ENCODE measurements at regions of chr6 and their contacts with region 1.

Region 1: DNA sequence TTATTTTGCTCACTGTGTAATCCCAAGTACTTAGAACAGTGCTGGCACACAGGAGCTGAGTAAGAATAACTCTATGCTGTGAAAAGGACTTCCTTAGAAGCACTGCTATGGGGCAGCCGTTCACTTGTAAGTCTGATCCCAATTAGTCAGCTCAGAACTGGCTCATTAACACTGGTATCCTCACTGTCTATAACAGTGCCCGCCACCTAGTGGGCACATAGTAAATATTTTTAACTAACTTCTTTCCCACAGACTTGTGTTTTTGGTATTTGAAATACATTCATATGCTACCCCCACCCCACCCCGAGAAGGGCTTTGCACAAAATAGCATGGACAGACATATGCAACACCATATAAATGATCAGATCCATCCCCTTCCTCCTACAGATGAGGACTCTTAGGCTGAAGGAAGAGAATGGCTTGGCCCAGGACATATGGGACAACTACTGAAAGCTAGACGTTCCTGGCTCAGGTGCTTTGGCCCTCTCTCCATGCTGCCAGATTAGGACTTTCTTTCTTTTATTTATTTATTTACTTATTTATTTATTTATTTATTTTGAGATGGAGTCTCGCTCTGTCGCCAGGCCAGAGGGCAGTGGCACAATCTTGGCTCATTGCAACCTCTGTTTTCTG is 47.1 kb downstream of the DST start:
- DNase-seq: peak; percentile 5 to 43
- H3K4me3 ChIP-seq: no peak overlapping the region
- H3K27ac ChIP-seq: no peak overlapping the region
- H3K4me1 ChIP-seq: no peaks in the 10 kb centered on the region
- H3K27me3 ChIP-seq: no peaks in the 10 kb centered on the region
- CTCF ChIP-seq: peak; percentile 81

Region 2: DNA sequence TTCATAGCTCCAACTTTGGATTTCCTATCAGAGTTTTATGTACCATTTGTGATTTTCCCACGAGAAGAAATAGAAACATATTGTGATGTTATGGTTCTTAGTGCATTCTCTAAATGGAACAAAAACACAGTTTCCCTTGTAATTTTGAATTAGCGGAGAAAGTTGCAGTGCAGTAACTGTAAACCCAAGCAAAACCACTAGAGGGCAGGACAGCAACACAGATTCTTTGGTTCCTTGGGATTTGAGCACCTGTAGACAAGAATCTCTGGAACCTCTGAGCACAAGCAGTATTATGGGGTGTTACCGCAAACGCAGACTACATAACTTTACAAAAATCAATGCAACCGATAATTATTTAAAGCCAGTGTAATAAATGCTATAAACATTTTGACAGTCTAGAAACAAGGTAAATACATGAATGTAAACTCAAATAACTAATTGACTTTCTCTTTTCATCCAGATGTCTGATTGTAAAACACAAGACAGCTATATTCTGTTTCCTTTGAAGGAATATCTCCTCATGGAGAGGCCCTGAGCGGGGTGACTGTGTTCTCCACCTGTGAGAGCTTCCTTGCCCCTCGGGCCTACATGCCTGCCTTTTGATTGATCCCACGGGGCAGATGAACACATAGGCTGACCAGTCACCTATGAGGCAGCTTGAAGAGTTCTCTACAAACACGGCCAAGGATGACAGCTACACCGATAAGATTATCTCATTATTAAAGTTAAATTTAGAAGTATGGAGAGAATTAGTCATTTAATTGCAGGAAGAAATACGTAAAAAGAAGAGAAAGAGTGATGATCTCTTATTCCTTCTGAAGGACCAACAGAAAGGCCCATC is 280.7 kb before region 1 on chr6:
- CTCF ChIA-PET with region 1: interaction called, 4 read pairs
- POLR2A ChIA-PET with region 1: no interaction called
- intact Hi-C with region 1: loop called (anchors 1 kb)
- DNase-seq: peak in 1 of 2 experiments; percentile 29
- H3K4me3 ChIP-seq: no peak overlapping the region
- H3K27ac ChIP-seq: no peak overlapping the region
- H3K4me1 ChIP-seq: no peaks in the 10 kb centered on the region
- H3K27me3 ChIP-seq: no peaks in the 10 kb centered on the region
- CTCF ChIP-seq: peak; percentile 87

Region 3: DNA sequence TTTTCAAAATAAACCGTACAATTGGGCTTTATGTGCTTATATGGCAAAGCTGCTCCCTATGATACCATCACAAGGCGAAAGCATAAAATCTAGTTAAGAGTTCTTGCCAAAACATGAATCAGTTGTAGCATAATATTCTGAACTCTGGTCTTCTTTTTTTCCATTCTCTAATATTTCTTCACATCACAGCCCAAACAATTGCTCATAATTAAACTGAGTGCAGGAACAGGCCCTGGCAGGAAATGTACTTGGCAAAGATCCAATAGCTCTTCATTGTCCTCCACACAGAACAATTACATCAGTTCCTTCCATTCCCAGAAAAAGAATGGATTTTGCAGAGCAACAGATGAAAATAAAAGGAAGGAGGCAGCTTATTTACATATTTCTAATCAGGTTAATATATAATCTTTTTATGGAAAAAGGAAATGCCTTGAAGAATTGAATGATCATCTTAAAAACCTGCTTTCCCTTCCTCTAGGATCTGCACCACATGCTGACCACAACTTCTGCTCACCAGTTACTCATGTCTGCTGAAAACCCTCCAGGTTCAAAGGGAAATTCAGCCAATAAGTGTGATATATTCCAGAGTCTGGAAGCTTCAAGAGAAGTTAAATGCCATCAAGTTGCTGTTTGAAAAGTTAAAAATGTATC is 224.9 kb before region 1 on chr6:
- CTCF ChIA-PET with region 1: interaction called, 3 read pairs
- POLR2A ChIA-PET with region 1: interaction called, 5 read pairs
- intact Hi-C with region 1: loop called (anchors 5 kb)
- DNase-seq: peak in 1 of 2 experiments; percentile 54
- H3K4me3 ChIP-seq: no peak overlapping the region
- H3K27ac ChIP-seq: peak overlapping the region; percentile 37
- H3K4me1 ChIP-seq: peaks cover 20% of the 10 kb centered on the region
- H3K27me3 ChIP-seq: no peaks in the 10 kb centered on the region
- CTCF ChIP-seq: no peak